ENCODE measurements at regions of chr5 and their contacts with region 1.

Region 1: DNA sequence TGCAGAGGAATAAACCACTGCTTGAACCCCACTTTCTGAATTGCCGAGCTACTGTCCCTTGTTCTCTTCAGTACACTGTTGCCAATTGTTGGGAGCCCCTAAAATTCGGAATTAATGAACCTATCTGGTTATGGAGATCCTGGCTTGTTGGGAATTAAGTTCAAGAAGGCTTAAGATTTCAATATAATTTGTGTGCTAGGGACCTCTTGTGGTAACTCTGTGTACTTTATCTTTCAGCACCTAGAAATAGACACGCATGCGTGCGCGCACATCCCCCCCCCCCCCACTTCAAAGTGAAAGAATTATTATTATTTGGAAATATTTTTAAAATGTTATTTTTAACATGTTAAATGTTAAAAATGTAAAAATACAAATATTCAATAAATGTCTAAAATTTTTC is 53.3 kb upstream of the FAM169A start:
- DNase-seq: peak; percentile 64 to 77 (median 71)
- H3K4me3 ChIP-seq: no peak overlapping the region
- H3K27ac ChIP-seq: no peak overlapping the region
- H3K4me1 ChIP-seq: no peaks in the 10 kb centered on the region
- H3K27me3 ChIP-seq: no peaks in the 10 kb centered on the region

Region 2: DNA sequence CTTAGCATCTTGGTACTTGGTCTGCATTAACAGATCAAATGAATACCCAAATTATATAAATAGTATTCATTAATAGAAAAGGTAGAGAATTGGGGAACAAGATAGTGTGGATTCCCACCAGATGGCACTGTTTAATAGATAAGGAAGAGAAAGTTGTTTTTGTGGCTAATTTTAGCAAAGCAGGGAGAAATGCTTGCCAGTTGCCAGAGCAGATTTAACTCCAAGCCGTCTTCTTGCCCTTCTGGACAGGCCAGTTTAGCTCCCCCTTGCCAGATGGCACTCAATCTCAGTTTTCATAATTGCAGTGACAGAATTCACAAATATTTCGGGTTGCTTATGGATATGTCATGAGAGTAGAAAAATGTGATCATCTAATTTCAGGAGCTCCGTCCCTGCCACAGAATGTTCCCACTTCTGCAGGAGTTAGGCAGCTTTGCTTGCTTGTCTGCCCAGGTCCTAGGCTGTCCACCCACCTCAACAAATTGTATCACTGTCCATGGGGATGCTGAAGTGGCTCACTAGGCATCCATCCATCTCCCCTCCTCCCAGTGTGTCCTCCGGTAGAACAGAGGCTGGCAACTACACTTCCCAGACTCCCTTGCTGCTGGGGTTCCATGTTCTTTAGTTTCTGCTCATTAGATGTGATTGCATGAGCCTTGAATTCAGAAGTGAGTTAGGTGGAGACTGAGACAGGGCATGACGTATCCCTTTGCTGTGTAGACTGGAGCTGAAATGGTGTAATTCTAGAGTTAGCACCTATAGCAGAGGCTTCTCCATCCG is 246.3 kb before region 1 on chr5:
- CTCF ChIA-PET with region 1: interaction called, 20 read pairs
- POLR2A ChIA-PET with region 1: no interaction called
- DNase-seq: peak; percentile 49 to 75 (median 72)
- H3K4me3 ChIP-seq: peak overlapping the region in 1 of 7 experiments; percentile 42
- H3K27ac ChIP-seq: no peak overlapping the region
- H3K4me1 ChIP-seq: peaks cover 0 to 4% (median 0%) of the 10 kb centered on the region in 4 experiments
- H3K27me3 ChIP-seq: no peaks in the 10 kb centered on the region

Region 3: DNA sequence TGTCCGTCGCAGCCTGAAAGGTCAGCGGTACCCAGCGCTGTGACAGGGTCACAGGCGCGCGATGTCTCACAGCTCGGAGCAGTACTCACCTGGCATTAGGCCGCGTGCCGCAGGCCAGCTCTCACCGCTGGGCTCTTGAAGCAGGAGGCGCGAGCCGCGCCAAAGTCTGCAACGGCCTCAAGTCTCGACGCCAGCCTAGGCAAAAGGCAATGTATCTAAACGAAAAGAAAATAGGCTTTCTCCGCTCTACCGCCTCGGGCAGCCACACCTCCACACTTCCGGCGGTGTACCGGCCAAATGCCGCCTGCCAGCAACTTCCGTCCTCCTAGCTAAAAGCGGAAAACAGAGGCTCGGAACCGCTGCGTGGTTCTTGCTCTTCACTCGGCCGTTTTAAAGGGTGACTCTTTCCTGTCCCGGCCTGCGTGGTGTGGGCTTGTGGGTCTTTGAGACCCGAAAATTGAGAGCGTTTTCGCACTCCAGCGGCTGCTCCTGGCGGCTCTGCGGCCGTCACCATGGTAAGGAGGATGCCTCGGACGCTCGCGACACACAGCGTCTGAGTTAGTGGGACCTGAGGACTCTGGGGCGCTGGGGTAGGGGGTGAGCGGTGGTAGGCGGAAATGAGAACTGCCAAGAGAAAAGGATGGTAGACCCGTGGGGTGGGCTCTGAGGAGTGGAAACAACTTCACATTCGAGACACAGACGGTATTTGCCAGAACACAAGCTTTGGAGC is 152.5 kb before region 1 on chr5 and contains the starts of genes GFM2 and NSA2:
- CTCF ChIA-PET with region 1: interaction called, 10 read pairs
- POLR2A ChIA-PET with region 1: no interaction called
- DNase-seq: peak; percentile 96 to 98 (median 98)
- H3K4me3 ChIP-seq: peak within 1 kb of the TSS; percentile 89 to 100 (median 100)
- H3K27ac ChIP-seq: peak within 1 kb of the TSS; percentile 80 to 90
- H3K4me1 ChIP-seq: peaks cover 7 to 25% (median 17%) of the 10 kb centered on the region in 4 experiments
- H3K27me3 ChIP-seq: no peaks in the 10 kb centered on the region

Measured in common myeloid progenitor, CD34-positive (primary cell).